Right ventricle myocardium superior (tissue), 1 donor: ENCODE measurements at regions of chr13 and their contacts with region 1.

Region 1: DNA sequence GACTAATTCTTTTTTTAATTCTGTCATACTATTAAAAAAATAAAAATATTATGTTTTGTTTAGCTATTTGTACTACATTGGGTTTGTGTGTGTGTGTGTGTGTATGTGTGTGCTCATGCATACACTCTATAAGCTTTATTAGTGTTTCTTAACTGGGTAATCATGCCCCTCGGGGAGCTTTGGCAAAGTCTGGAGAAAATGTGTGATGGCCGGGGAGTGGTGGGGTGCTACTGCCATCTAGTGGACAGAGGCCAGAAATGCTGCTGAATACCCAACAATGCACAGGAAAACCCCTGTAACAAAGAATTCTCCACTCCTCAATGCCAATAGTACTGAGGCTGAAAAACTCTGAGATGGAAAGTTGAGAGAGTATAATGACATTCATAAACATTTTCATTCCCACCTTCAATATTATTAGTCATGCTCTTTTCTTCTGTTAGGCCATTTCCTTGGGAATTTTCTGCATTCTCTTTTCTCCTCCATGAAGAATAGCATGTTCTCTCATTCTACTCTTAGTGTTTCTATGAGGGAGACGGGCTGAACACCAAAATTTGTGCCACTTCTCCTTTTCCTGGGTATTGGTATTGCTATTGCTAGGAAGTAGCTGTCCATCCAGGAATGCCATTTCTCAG is 157.3 kb downstream of the DNAJC3 start:
- DNase-seq: peak; percentile 58
- ATAC-seq: peak; percentile 88

Region 2: DNA sequence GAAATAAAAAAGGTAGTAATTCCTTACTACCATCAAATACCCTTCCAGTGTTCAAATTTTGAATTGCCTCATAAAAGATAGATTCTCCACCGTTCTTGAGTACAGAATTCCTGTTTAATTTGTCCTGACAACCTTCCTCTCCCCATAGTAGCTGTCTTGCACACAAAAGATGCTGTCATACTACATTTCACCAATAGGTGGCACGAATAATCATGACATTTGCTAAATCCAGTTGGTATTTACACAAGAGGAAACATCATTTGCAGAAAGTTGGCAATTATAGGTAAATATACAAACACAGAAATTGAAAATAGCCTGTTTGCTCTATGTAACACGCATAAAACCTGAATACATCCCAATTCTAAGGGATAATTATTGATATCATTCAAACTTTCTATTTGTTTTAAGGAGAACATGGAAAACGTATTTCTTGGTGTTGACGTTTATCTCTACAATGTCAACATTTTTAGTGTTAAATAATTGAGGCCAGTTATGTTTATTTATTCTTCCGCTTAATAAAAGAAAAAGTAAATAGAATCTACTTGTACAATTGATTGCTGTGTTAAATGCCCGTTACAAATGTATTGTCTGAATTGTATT is 340.1 kb before region 1 on chr13:
- intact Hi-C with region 1: loop called (anchors 10 kb)
- DNase-seq: no peak
- ATAC-seq: peak; percentile 47

Region 3: GRCh38 chr13:95624020-95624419 is 210.2 kb before region 1 on chr13:
- intact Hi-C with region 1: loop called (anchors 2 kb)
- DNase-seq: no peak
- ATAC-seq: peak; percentile 45